Caco-2 (cell line): ENCODE measurements at regions of chr6 and their contacts with region 1.

Region 1: DNA sequence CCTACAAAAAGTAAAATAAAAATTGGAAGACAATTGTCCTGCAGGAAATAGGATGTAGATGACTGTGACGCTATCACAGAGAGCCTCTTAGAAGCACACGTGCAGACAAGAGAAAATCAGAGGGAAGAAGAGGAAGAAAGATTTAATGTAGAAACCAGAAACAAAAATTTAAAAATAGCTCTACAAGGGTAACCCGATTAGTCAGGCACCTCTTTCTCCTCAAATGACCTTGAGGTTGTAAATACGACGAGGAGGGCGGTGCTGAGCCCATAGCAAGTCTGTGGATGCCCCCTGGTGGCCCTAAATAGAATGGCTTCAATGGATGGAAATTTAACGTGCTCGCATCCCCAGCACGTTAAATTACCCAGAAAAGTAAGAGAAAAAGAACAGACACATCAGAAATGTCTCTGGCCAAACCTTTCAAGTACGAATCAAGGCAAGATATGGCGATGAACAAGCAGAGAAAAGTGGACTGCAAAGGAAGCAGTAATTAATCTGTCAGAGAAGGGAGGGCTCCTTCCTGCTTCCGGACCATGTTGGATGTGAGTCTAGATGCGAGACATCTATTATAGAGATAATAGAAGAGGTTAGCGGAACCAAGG is 4.2 kb upstream of the PRPH2 start:
- DNase-seq: peak; percentile 69 to 71
- H3K4me3 ChIP-seq: peak overlapping the region; percentile 30
- H3K4me3 Mint-ChIP-seq: peak overlapping the region; percentile 69
- H3K27ac Mint-ChIP-seq: no peak overlapping the region
- H3K4me1 ChIP-seq: peaks cover 4% of the 10 kb centered on the region; the same call in 1 of the 2 replicates
- H3K4me1 Mint-ChIP-seq: peaks cover 12% of the 10 kb centered on the region
- H3K27me3 ChIP-seq: no peaks in the 10 kb centered on the region
- H3K27me3 Mint-ChIP-seq: no peaks in the 10 kb centered on the region
- CTCF ChIP-seq: peak; percentile 77 to 79

Region 2: GRCh38 chr6:42661540-42662153 is 64.9 kb before region 1 on chr6:
- CTCF ChIA-PET with region 1: interaction called, 34 read pairs
- POLR2A ChIA-PET with region 1: no interaction called
- intact Hi-C with region 1: loop called (anchors 1 kb)
- DNase-seq: peak; percentile 65 to 78
- H3K4me3 ChIP-seq: no peak overlapping the region
- H3K4me3 Mint-ChIP-seq: no peak overlapping the region
- H3K27ac Mint-ChIP-seq: no peak overlapping the region
- H3K4me1 ChIP-seq: no peaks in the 10 kb centered on the region
- H3K4me1 Mint-ChIP-seq: no peaks in the 10 kb centered on the region
- H3K27me3 ChIP-seq: no peaks in the 10 kb centered on the region
- H3K27me3 Mint-ChIP-seq: no peaks in the 10 kb centered on the region
- CTCF ChIP-seq: peak; percentile 83 to 85